Motor neuron (in vitro differentiated cells): ENCODE measurements at regions of chr1 and their contacts with region 1.

Region 1: DNA sequence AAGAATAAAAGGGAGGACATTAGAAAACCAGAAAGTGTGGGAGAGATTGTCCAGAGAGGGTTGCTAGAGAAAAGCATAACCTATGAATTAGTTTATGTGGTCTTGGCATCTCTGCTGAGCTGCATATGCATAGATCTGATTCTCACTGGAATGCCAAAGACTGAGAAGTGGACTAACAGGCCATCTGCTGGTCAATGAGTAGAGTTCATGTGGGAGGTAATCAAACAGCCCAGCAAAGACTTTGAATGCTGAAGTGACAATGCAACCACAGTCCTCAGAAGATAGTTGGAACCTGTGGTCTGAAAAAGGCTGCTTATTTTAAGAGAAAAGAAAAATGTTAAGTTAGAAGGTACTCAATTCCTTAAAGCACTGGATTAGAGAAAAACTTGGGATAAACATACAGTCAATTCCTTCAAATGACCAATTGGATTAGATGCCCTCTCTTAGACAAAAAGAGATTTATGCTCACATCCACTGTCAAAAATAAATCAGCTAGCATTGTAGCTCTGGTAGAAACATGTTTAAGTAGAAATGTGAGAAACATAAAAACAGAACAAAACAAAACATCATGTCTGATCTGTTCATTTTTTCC is 382.8 kb downstream of the AMY1C start:
- ATAC-seq: peak; percentile 43 to 99 (median 68)
- H3K4me3 ChIP-seq: no peak overlapping the region
- H3K27ac ChIP-seq: no peak overlapping the region
- H3K4me1 ChIP-seq: no peaks in the 10 kb centered on the region

Region 2: GRCh38 chr1:103948526-103948925 is 184.0 kb before region 1 on chr1:
- in situ Hi-C with region 1: loop called in 1 of 9 experiments (anchors 25 kb)
- ATAC-seq: no peak
- H3K4me3 ChIP-seq: no peak overlapping the region
- H3K27ac ChIP-seq: no peak overlapping the region
- H3K4me1 ChIP-seq: no peaks in the 10 kb centered on the region